KBM-7 (cell line): ENCODE measurements at regions of chr15 and their contacts with region 1.

Region 1: GRCh38 chr15:59528965-59529402 is 82.6 kb upstream of the GCNT3 start:
- DNase-seq: peak; percentile 75

Region 2: DNA sequence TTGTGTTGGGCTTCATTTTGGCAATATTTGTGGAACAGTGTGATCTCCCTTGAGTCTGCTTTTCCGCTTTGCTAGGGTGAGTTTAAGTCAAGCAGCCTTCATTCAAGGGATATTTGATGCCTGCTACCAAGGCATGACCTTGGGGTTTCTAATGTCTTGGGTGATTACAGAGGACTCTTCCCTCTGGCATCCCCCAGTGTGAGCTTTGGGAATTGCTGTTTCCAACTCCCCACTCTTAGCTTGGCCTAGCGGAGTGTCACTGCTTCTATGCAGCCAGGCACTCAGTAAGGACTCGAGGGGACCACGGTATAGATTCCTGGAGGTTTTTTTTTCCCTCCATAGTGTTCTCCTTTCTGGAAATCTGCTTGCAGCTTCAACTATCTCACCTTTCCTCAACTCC is 103.7 kb after region 1 on chr15:
- in situ Hi-C with region 1: loop called (anchors 25 kb)
- DNase-seq: no peak

Region 3: GRCh38 chr15:60212536-60212935 is 683.6 kb after region 1 on chr15:
- in situ Hi-C with region 1: no loop called
- DNase-seq: no peak